GM13977 (cell line): ENCODE measurements at regions of chr4 and their contacts with region 1.

Region 1: GRCh38 chr4:103008875-103009729 is 10.4 kb downstream of the SLC9B1 start:
- DNase-seq: peak; percentile 44
- CTCF ChIP-seq: peak; percentile 61

Region 2: DNA sequence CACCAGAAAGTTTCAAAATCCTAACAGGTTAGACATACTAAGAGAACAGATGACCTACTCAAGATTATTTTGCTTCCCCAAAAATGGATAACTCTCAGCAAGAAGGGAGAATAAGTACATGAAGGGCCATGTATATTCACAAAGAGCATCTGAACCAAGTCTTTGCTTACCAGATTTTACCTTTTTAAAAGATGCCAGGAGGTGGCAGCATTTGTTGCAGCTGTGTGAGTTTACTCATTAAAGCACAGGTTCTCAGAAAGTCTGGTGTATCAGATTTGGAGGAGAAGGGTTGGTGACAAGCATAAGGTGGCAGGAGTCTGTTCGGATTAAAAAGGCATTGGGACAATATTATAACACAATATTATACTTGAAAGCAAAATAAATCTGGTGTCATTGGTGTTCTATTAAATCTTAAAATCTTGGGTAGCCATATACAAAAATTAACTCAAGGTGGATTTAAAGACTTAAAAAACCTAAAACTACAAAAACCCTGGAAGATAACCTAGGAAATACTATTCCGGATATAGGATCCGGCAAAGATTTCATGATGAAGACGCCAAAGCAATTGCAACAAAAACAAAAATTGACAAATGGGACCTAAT is 559.2 kb before region 1 on chr4:
- in situ Hi-C with region 1: loop called (anchors 10 kb)
- DNase-seq: peak; percentile 58
- CTCF ChIP-seq: peak; percentile 66

Region 3: GRCh38 chr4:102511830-102512605 is 497.1 kb before region 1 on chr4:
- in situ Hi-C with region 1: no loop called
- DNase-seq: no peak
- CTCF ChIP-seq: no peak